Activated naive CD4-positive, alpha-beta T cell treated with anti-CD3 and anti-CD28 coated beads for 36 hours (primary cell): ENCODE measurements at regions of chr5 and their contacts with region 1.

Region 1: GRCh38 chr5:112757468-112758208 is 20.0 kb downstream of the APC start:
- DNase-seq: no peak
- H3K4me3 Mint-ChIP-seq: no peak overlapping the region
- H3K27ac Mint-ChIP-seq: no peak overlapping the region
- H3K4me1 Mint-ChIP-seq: peaks cover 2% of the 10 kb centered on the region
- H3K27me3 Mint-ChIP-seq: no peaks in the 10 kb centered on the region

Region 2: DNA sequence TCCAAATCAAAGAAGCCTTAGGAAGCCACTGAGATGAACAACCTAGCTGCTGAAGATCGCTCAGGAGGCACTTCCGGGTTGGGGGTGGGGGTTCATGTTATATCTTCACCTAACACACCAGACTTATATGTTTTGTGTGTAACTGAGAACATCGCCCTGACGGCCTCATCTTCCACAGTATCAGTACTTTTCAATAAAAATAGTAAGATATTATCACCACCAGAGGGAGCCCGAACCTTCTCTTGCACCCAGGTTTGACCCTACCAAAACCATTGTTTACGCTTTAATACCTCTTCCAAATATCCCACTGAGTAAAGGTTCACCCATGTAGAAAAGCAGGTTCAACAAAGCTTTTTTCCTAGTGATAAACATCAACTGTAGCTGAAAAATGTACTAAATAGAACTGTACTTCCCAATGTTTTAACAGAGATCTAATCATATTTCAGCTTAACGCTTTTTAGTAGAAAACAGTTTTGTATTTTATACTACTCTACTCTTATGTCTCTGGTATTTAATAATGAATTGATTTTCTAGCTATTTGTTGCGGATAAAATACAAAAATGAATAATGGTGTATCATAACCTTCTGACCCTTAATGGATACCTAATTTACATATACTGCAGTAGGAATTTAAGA is 582.6 kb before region 1 on chr5:
- CTCF ChIA-PET with region 1: interaction called, 7 read pairs
- intact Hi-C with region 1: loop called (anchors 1 kb)
- DNase-seq: peak; percentile 40
- H3K4me3 Mint-ChIP-seq: no peak overlapping the region
- H3K27ac Mint-ChIP-seq: no peak overlapping the region
- H3K4me1 Mint-ChIP-seq: peaks cover 2% of the 10 kb centered on the region
- H3K27me3 Mint-ChIP-seq: no peaks in the 10 kb centered on the region

Region 3: DNA sequence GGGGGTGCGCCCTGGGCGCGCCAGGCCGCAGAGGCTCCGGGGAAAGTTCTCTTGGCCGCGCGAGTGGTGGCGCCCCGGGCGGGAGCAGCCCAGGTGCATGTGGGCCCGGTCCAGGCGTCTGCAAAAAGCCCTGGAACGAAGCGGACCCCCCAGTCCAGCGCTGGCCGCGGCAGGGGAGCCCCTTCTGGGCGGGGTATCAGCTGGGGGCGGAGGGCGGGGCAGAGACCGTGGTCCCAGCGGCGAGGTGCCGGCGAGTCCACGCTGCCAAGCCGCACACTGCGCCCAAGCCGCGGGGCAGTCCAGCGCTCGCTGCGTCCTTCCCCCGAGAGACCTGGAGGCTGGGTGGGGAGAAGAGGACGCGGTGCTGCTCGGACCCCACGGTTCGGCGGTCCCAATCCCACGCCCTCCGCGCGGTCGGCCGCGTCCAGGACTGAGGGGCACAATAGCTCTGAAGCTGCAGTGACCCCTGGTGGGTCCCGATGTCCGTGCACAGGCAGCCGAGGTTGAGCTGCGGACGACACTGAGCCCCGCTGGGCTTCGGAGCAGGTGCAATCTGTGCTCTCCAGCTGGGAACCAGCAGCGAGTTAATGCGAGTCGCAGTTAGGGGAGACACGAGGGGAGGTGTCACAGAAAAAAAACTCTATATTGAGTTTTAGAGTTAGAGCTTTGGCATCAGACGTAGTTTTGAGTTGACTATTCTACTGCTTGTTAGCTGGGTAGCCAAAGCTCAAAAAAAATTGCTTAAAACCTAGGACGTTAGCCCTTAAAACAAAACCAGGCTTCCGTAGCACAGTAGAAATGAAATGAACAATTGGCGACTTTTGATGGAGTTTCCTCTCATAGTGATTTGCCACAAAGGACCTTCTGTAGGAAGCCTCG is 337.4 kb before region 1 on chr5:
- CTCF ChIA-PET with region 1: no interaction called
- intact Hi-C with region 1: loop called (anchors 5 kb)
- DNase-seq: peak; percentile 60
- H3K4me3 Mint-ChIP-seq: peak overlapping the region; percentile 56
- H3K27ac Mint-ChIP-seq: no peak overlapping the region
- H3K4me1 Mint-ChIP-seq: peaks cover 10% of the 10 kb centered on the region
- H3K27me3 Mint-ChIP-seq: peaks cover 45% of the 10 kb centered on the region

Region 4: GRCh38 chr5:112551419-112552032 is 206.1 kb before region 1 on chr5:
- CTCF ChIA-PET with region 1: interaction called, 55 read pairs
- intact Hi-C with region 1: loop called (anchors 1 kb)
- DNase-seq: peak; percentile 45
- H3K4me3 Mint-ChIP-seq: no peak overlapping the region
- H3K27ac Mint-ChIP-seq: no peak overlapping the region
- H3K4me1 Mint-ChIP-seq: no peaks in the 10 kb centered on the region
- H3K27me3 Mint-ChIP-seq: no peaks in the 10 kb centered on the region

Region 5: GRCh38 chr5:112691758-112692157 is 65.9 kb before region 1 on chr5:
- CTCF ChIA-PET with region 1: interaction called, 50 read pairs
- intact Hi-C with region 1: loop called (anchors 1 kb)
- DNase-seq: peak; percentile 63
- H3K4me3 Mint-ChIP-seq: no peak overlapping the region
- H3K27ac Mint-ChIP-seq: no peak overlapping the region
- H3K4me1 Mint-ChIP-seq: no peaks in the 10 kb centered on the region
- H3K27me3 Mint-ChIP-seq: peaks cover 4% of the 10 kb centered on the region

Region 6: GRCh38 chr5:112737463-112738190 is 20.0 kb before region 1 on chr5 and contains the start of gene APC:
- CTCF ChIA-PET with region 1: interaction called, 14 read pairs
- intact Hi-C with region 1: no loop called
- DNase-seq: peak; percentile 92
- H3K4me3 Mint-ChIP-seq: peak within 1 kb of the TSS; percentile 95
- H3K27ac Mint-ChIP-seq: no peak within 1 kb of the TSS
- H3K4me1 Mint-ChIP-seq: peaks cover 18% of the 10 kb centered on the region
- H3K27me3 Mint-ChIP-seq: no peaks in the 10 kb centered on the region
- total RNA-seq, gene APC: 15.6 to 17.2 TPM